Lower leg skin (tissue), 4 donors: ENCODE measurements at regions of chr3 and their contacts with region 1.

Region 1: DNA sequence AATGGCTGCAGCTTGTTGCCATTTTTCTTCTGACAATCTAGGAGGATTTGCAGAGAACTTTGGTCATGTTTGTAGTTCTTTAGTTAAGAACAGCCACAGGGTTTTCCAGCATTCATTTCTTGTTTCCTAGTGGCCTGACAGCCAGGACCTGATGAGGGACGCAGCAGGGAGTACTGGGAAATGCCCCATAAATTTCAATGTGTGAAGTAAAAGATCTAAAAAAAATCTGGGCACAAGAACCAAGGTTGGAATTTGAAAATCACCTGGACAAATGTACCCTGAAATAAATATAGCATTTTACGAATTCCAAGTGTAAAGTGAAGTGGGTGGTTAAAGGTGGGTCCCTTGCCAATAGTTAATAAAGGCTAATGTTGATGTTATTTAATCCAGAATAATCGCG is 195.0 kb downstream of the ZIC1 start:
- DNase-seq: no peak
- H3K4me3 ChIP-seq: no peak overlapping the region
- CTCF ChIP-seq: no peak
- POLR2A ChIP-seq: no peak

Region 2: DNA sequence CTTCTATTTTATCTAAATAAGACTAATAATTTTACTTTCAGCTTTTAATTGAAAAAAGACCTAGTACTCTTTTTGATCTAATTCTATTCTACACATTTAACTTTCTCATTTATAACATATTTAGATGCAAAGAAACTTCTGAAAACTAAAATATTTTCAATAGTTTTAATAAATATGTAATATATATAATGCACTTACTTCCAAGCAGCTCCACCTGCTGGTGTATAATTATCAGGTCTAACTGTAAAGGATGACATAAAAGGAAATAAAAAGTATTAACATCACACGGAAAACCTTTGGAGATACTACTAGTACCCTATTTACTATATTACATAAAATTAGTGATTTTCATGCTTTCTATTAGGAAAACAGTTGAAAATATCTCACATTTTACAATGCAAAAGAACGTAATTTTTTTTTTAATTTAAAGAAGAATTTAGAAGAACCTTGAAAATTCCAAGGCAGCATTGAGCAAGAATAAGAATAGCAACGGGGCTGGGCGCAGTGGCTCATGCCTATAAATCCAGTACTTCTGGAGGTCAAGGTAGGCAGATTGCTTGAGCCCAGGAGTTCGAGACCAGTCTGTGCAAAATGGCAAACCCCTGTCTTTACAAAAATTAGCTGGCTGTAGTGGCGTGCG is 1009.2 kb before region 1 on chr3:
- intact Hi-C with region 1: loop called (anchors 5 kb)
- DNase-seq: no peak
- H3K4me3 ChIP-seq: no peak overlapping the region
- CTCF ChIP-seq: no peak
- POLR2A ChIP-seq: no peak